CD8-positive, alpha-beta T cell (primary cell): ENCODE measurements at regions of chr22 and their contacts with region 1.

Region 1: DNA sequence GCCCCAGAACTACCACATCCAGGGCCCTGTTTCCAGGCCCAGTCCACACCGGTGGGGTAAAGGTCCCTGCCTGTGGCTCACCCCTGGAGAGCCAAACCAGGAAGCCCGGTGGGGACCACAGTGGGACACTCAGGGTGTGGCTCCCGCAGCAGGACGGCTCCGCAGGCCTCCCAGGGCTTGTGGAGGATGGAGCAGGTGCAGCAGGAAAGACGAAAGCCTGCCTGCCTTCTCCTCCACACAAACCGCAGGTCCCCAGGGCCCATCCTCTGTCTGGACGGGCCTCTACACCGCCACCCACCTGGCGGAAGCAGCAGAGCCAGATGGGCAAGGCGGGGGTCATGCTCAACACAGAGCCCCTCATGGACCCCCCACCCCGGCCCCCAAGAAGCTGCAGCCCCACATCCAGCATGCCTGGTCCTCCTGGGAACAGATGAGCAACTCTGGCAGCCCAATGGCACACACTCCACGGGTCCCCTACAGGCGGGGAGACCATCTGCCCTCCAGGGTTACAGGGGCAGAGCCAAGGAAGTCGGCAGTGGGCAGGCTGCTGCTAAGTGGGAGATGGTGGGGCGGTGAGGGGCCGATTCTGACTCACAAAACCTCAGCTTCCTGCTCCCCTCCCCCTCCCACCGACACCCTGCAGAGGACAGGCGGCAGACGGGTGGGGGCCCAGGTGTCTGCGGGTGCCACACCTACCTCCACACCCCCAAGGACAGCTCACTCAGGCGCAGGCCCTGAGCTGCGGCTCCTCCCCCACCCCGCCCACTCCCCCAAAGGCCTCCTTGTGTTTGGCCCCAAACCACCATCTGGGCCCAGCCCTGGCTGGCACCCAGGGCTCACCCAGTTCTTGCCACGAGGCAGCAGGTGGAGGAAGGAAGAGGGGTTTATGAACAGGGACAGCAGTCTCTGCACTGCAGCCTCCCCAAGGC is 5.2 kb downstream of the SBF1 start:
- DNase-seq: peak; percentile 94 to 100 (median 99)
- ATAC-seq: peak; percentile 85
- H3K4me3 ChIP-seq: peak overlapping the region; percentile 50 to 79
- H3K4me3 Mint-ChIP-seq: peak overlapping the region; percentile 75
- H3K27ac ChIP-seq: peak overlapping the region; percentile 81 to 82
- H3K27ac Mint-ChIP-seq: peak overlapping the region; percentile 96
- H3K4me1 ChIP-seq: peaks cover 79% of the 10 kb centered on the region
- H3K4me1 Mint-ChIP-seq: peaks cover 76% of the 10 kb centered on the region
- H3K27me3 ChIP-seq: no peaks in the 10 kb centered on the region
- H3K27me3 Mint-ChIP-seq: no peaks in the 10 kb centered on the region
- CTCF ChIP-seq: peak; percentile 23

Region 2: GRCh38 chr22:50270666-50271394 is 198.8 kb before region 1 on chr22:
- CTCF ChIA-PET with region 1: interaction called, 3 read pairs
- POLR2A ChIA-PET with region 1: no interaction called
- intact Hi-C with region 1: loop called in 1 of 2 experiments (anchors 1 kb)
- DNase-seq: peak; percentile 49 to 82 (median 72)
- ATAC-seq: peak; percentile 64
- H3K4me3 ChIP-seq: peak overlapping the region; percentile 45 to 65
- H3K4me3 Mint-ChIP-seq: peak overlapping the region; percentile 69
- H3K27ac ChIP-seq: no peak overlapping the region
- H3K27ac Mint-ChIP-seq: no peak overlapping the region
- H3K4me1 ChIP-seq: peaks cover 25% of the 10 kb centered on the region
- H3K4me1 Mint-ChIP-seq: peaks cover 18% of the 10 kb centered on the region
- H3K27me3 ChIP-seq: peaks cover 0 to 2% of the 10 kb centered on the region in 2 experiments
- H3K27me3 Mint-ChIP-seq: peaks cover 3% of the 10 kb centered on the region
- CTCF ChIP-seq: no peak

Region 3: GRCh38 chr22:50314455-50315288 is 155.0 kb before region 1 on chr22:
- CTCF ChIA-PET with region 1: no interaction called
- POLR2A ChIA-PET with region 1: no interaction called
- intact Hi-C with region 1: no loop called
- DNase-seq: peak; percentile 41 to 86 (median 76)
- ATAC-seq: peak; percentile 94
- H3K4me3 ChIP-seq: peak overlapping the region; percentile 44 to 51
- H3K4me3 Mint-ChIP-seq: peak overlapping the region; percentile 81
- H3K27ac ChIP-seq: peak overlapping the region; percentile 51 to 70
- H3K27ac Mint-ChIP-seq: peak overlapping the region; percentile 93
- H3K4me1 ChIP-seq: peaks cover 19% of the 10 kb centered on the region
- H3K4me1 Mint-ChIP-seq: peaks cover 16% of the 10 kb centered on the region
- H3K27me3 ChIP-seq: no peaks in the 10 kb centered on the region
- H3K27me3 Mint-ChIP-seq: no peaks in the 10 kb centered on the region
- CTCF ChIP-seq: no peak

Region 4: GRCh38 chr22:50444663-50445062 is 25.0 kb before region 1 on chr22:
- CTCF ChIA-PET with region 1: interaction called, 4 read pairs
- POLR2A ChIA-PET with region 1: interaction called, 25 read pairs
- intact Hi-C with region 1: loop called in 1 of 2 experiments (anchors 1 kb)
- DNase-seq: peak in 1 of 9 experiments; percentile 4
- ATAC-seq: no peak
- H3K4me3 ChIP-seq: peak overlapping the region in 1 of 2 experiments; percentile 3
- H3K4me3 Mint-ChIP-seq: no peak overlapping the region
- H3K27ac ChIP-seq: peak overlapping the region; percentile 38 to 82
- H3K27ac Mint-ChIP-seq: peak overlapping the region; percentile 93
- H3K4me1 ChIP-seq: peaks cover 36% of the 10 kb centered on the region
- H3K4me1 Mint-ChIP-seq: peaks cover 29% of the 10 kb centered on the region
- H3K27me3 ChIP-seq: no peaks in the 10 kb centered on the region
- H3K27me3 Mint-ChIP-seq: no peaks in the 10 kb centered on the region
- CTCF ChIP-seq: no peak

Region 5: DNA sequence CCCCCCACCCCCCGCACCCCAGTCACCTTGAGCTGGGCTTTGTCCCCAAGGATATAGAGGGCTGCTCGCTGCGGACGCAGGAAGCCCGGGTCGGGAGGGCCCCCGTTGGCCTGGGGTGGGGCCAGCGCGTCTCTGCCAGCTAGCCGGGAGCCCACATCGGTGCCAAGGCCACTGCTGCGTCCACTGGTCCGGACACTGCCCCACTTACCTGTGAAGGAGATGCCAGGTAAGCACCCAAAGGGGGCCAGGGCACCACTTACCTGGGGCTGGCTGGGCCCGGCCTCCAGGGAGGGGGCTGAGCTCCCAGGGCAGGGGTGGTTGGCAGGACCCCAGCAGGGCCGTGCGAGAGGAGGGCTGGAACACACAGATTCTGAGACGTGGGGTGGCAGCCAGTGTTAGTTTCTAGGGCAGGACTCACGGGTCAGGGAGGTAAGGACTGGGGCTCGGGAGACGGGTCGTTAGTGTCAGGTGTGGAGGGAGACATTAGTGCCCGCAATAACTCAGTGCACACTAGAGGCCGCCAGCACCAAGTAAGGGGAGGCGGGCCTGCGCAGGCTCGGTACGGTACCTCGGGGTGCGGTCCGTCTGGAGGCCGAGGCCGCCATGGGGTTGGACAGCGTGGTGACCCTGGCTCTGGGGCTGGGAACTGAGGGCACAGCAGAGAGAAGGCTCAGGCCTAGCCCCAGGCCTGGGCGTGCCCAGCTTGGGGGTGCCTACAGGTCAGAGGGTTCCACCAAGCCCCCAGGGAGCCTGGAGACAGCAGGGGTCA is 13.0 kb before region 1 on chr22:
- CTCF ChIA-PET with region 1: interaction called, 29 read pairs
- POLR2A ChIA-PET with region 1: interaction called, 4 read pairs
- intact Hi-C with region 1: no loop called
- DNase-seq: no peak
- ATAC-seq: peak; percentile 58
- H3K4me3 ChIP-seq: no peak overlapping the region
- H3K4me3 Mint-ChIP-seq: no peak overlapping the region
- H3K27ac ChIP-seq: no peak overlapping the region
- H3K27ac Mint-ChIP-seq: peak overlapping the region; percentile 66
- H3K4me1 ChIP-seq: no peaks in the 10 kb centered on the region
- H3K4me1 Mint-ChIP-seq: peaks cover 3% of the 10 kb centered on the region
- H3K27me3 ChIP-seq: no peaks in the 10 kb centered on the region
- H3K27me3 Mint-ChIP-seq: no peaks in the 10 kb centered on the region
- CTCF ChIP-seq: no peak

Region 6: DNA sequence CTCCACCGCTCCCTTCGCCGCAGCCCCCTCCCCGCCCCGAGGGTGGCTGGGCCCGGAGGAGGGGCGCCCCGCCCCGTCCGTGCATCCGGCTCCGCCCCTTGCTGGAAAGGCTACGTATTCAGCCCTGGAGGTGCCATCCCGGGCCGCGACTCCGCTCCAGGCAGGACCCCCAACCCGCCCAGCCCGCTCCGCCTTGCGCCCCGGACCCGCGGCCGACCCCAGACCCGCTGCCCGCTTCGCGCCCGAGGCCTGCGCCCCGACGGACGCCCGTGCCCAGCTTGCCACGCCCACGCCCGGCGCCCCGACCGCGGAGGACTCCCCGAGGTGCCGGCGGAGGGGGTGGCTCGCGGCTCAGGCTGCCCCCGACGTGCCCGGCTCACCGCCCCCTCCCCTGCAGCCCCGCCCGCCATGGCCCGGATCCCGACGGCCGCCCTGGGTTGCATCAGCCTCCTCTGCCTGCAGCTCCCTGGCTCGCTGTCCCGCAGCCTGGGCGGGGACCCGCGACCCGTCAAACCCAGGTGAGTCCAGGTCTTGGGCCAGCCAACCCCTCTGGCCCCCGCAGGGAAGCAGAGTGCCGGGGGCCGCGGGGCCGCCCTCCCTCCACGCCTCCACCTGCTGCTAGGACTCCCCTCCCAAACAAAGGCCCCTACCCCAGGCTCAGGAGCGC is 11.9 kb after region 1 on chr22 and contains the start of gene ADM2:
- CTCF ChIA-PET with region 1: interaction called, 3 read pairs
- POLR2A ChIA-PET with region 1: interaction called, 5 read pairs
- intact Hi-C with region 1: loop called in 1 of 2 experiments (anchors 1 kb)
- DNase-seq: peak in 8 of 9 experiments; percentile 50 to 78 (median 70)
- ATAC-seq: peak; percentile 90
- H3K4me3 ChIP-seq: peak within 1 kb of the TSS; percentile 29 to 45
- H3K4me3 Mint-ChIP-seq: peak within 1 kb of the TSS; percentile 73
- H3K27ac ChIP-seq: no peak within 1 kb of the TSS
- H3K27ac Mint-ChIP-seq: no peak within 1 kb of the TSS
- H3K4me1 ChIP-seq: peaks cover 7% of the 10 kb centered on the region
- H3K4me1 Mint-ChIP-seq: peaks cover 4% of the 10 kb centered on the region
- H3K27me3 ChIP-seq: peaks cover 0 to 6% of the 10 kb centered on the region in 2 experiments
- H3K27me3 Mint-ChIP-seq: peaks cover 4% of the 10 kb centered on the region
- CTCF ChIP-seq: no peak
- total RNA-seq, gene ADM2: 1.1 to 1.5 TPM

Region 7: GRCh38 chr22:50498322-50498890 is 28.8 kb after region 1 on chr22:
- CTCF ChIA-PET with region 1: interaction called, 43 read pairs
- POLR2A ChIA-PET with region 1: interaction called, 10 read pairs
- intact Hi-C with region 1: loop called in 1 of 2 experiments (anchors 1 kb)
- DNase-seq: peak; percentile 41 to 84 (median 76)
- ATAC-seq: peak; percentile 99
- H3K4me3 ChIP-seq: no peak overlapping the region
- H3K4me3 Mint-ChIP-seq: no peak overlapping the region
- H3K27ac ChIP-seq: no peak overlapping the region
- H3K27ac Mint-ChIP-seq: no peak overlapping the region
- H3K4me1 ChIP-seq: no peaks in the 10 kb centered on the region
- H3K4me1 Mint-ChIP-seq: no peaks in the 10 kb centered on the region
- H3K27me3 ChIP-seq: no peaks in the 10 kb centered on the region
- H3K27me3 Mint-ChIP-seq: no peaks in the 10 kb centered on the region
- CTCF ChIP-seq: peak; percentile 63

Region 8: GRCh38 chr22:50507991-50508884 is 38.6 kb after region 1 on chr22 and contains the start of gene NCAPH2:
- CTCF ChIA-PET with region 1: no interaction called
- POLR2A ChIA-PET with region 1: interaction called, 20 read pairs
- intact Hi-C with region 1: loop called (anchors 1 kb)
- DNase-seq: peak in 8 of 9 experiments; percentile 94 to 99 (median 98)
- ATAC-seq: peak; percentile 74
- H3K4me3 ChIP-seq: peak within 1 kb of the TSS; percentile 88 to 97
- H3K4me3 Mint-ChIP-seq: peak within 1 kb of the TSS; percentile 96
- H3K27ac ChIP-seq: peak within 1 kb of the TSS; percentile 93
- H3K27ac Mint-ChIP-seq: peak within 1 kb of the TSS; percentile 99
- H3K4me1 ChIP-seq: peaks cover 23% of the 10 kb centered on the region
- H3K4me1 Mint-ChIP-seq: peaks cover 26% of the 10 kb centered on the region
- H3K27me3 ChIP-seq: no peaks in the 10 kb centered on the region
- H3K27me3 Mint-ChIP-seq: no peaks in the 10 kb centered on the region
- CTCF ChIP-seq: no peak
- total RNA-seq, gene NCAPH2: 206 to 209 TPM